Esophagus muscularis mucosa (tissue), 4 donors: ENCODE measurements at regions of chr6 and their contacts with region 1.

Region 1: DNA sequence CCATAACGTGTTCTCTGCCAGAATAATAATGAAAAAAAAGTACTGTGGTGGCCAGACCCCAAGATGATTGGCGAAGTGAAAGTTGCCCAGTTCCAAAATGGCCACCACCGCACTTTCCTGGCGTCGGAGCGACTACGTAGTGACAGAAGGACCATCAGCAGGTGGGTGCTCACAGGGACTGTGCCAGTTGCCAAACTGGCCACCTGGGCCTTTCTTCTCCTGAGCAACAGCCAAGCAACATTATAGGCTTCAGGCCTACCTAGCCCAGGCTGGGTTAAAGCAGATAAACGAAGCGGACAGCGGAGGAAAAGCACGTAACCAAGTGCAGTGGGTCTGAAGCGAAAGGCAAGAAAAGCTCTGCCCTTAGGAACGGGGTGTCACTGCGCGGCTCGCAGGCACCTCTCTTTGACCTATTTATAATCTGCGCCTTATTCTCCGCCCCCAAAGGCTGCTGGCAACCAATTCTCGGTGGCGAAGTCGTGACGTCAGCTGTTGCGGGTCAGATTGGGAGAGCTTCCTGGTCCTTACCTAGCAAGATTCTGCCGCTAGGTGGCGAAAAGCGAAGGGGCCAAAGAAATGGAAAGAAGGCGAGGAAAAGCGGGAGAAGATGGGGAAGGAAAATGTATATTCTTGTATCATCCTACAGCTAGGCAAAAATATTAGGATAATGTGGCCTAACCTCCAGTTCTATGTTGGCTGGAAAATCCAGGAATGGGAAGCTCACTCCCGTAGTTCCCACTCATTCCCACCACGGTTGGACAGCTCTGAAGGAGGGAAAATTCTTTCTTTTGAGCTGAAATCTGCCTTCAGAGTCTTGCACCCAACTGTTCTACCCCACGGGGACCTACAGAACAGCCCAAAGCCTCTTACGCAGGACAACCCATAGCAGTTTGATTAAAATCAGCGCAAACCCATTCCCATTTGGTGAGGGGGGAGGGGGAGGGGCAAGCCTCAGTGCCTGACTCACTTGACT is 6.9 kb upstream of the MOG start:
- DNase-seq: peak; percentile 99
- H3K4me3 ChIP-seq: peak overlapping the region; percentile 58 to 69 (median 64)
- H3K27ac ChIP-seq: peak overlapping the region; percentile 93 to 98 (median 93)
- H3K4me1 ChIP-seq: peaks cover 10 to 27% (median 22%) of the 10 kb centered on the region in 4 donors
- H3K27me3 ChIP-seq: no peaks in the 10 kb centered on the region
- CTCF ChIP-seq: peak; percentile 88 to 94 (median 94)
- EP300 ChIP-seq: no peak
- POLR2A ChIP-seq: no peak

Region 2: DNA sequence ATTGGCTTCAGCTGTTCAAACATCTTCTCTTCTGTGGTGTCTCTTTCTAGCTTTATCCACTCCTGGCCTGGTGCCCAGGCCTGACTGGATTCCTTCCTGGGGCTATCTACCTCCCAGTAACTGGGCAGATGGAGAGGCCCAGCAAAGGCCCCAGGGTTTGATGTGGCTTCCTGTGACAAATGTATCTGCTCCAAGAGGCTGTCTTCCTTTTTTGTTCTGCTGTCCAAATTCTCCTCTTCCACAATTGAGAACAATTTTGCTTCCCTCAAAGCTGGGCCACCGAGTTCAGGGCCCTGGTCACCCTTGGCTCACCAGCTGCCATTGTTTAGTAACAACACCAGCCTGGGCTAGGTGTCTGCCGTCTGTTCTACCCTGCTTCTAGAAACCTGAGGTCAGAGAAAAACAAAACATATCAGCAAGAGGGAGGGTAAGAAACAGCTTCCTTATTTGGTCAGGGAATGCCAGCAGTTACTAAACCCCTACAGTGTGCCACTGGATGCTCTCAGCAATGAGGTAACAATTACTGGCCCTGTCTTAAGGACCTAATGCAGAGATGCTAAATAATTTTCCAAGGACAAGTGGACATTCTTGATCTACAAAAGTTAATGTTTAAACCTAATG is 27.1 kb after region 1 on chr6:
- intact Hi-C with region 1: no loop called
- DNase-seq: no peak
- H3K4me3 ChIP-seq: no peak overlapping the region
- H3K27ac ChIP-seq: peak overlapping the region in 1 of 4 donors; percentile 48
- H3K4me1 ChIP-seq: peaks cover 0 to 11% (median 0%) of the 10 kb centered on the region in 4 donors
- H3K27me3 ChIP-seq: peaks cover 0 to 11% (median 0%) of the 10 kb centered on the region in 4 donors
- CTCF ChIP-seq: no peak
- EP300 ChIP-seq: no peak
- POLR2A ChIP-seq: no peak

Region 3: GRCh38 chr6:29723262-29723665 is 73.3 kb after region 1 on chr6 and contains the start of gene HLA-F:
- intact Hi-C with region 1: loop called (anchors 10 kb)
- DNase-seq: peak; percentile 98
- H3K4me3 ChIP-seq: peak within 1 kb of the TSS; percentile 86 to 96 (median 91)
- H3K27ac ChIP-seq: peak within 1 kb of the TSS; percentile 86 to 92 (median 86)
- H3K4me1 ChIP-seq: peaks cover 8 to 25% (median 19%) of the 10 kb centered on the region in 4 donors
- H3K27me3 ChIP-seq: no peaks in the 10 kb centered on the region
- CTCF ChIP-seq: no peak
- EP300 ChIP-seq: no peak
- POLR2A ChIP-seq: peak; percentile 46
- total RNA-seq, gene HLA-F: 36.1 to 69.6 (median 52.8) TPM